ENCODE measurements at regions of chr3 and their contacts with region 1.

Region 1: DNA sequence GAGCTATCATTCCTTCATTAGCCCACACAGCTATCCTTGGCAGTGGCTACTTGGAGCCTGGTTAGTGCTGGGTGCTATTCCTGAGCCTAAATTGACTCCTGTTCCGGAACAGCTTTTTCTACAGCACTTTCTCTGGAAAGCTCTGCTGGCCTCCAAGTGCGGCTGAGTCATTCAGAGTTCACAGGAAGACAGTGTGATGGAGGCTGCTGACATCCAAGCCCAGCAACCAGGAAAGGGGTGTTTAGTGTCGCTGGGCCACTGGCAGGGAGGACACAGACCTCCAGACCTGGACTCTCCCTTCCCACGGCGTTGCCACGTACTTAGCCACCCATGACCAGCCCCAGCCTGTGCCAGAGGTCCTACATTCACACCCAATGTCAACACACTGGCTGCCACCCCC is 28.7 kb downstream of the CACNA2D2 start:
- DNase-seq: no peak
- H3K4me3 ChIP-seq: no peak overlapping the region
- H3K27ac ChIP-seq: no peak overlapping the region
- H3K4me1 ChIP-seq: peaks cover 0 to 8% (median under 1%) of the 10 kb centered on the region in 4 experiments; a peak in 5 of 7 replicates
- H3K27me3 ChIP-seq: no peaks in the 10 kb centered on the region; a peak in 1 of 7 replicates
- CTCF ChIP-seq: no peak
- EP300 ChIP-seq: no peak
- POLR2A ChIP-seq: no peak
- RAD21 ChIP-seq: no peak

Region 2: GRCh38 chr3:50177346-50177745 is 297.4 kb before region 1 on chr3:
- CTCF ChIA-PET with region 1: no interaction called
- POLR2A ChIA-PET with region 1: no interaction called
- DNase-seq: no peak
- H3K4me3 ChIP-seq: no peak overlapping the region
- H3K27ac ChIP-seq: no peak overlapping the region
- H3K4me1 ChIP-seq: no peaks in the 10 kb centered on the region; a peak in 2 of 7 replicates
- H3K27me3 ChIP-seq: no peaks in the 10 kb centered on the region
- CTCF ChIP-seq: no peak
- EP300 ChIP-seq: no peak
- POLR2A ChIP-seq: no peak
- RAD21 ChIP-seq: no peak

Region 3: GRCh38 chr3:50245831-50246516 is 228.7 kb before region 1 on chr3:
- CTCF ChIA-PET with region 1: no interaction called
- POLR2A ChIA-PET with region 1: no interaction called
- DNase-seq: peak in 1 of 2 experiments; percentile 99
- H3K4me3 ChIP-seq: peak overlapping the region in 2 of 4 experiments; percentile 23 to 27; a peak in 4 of 8 replicates
- H3K27ac ChIP-seq: peak overlapping the region; percentile 53
- H3K4me1 ChIP-seq: peaks cover 5 to 48% (median 41%) of the 10 kb centered on the region in 4 experiments
- H3K27me3 ChIP-seq: no peaks in the 10 kb centered on the region
- CTCF ChIP-seq: peak in 2 of 3 experiments; percentile 91 to 97; a peak in 3 of 4 replicates
- EP300 ChIP-seq: peak in 1 of 2 experiments; percentile 69; a peak in 1 of 3 replicates
- POLR2A ChIP-seq: no peak; a peak in 1 of 3 replicates
- RAD21 ChIP-seq: peak; percentile 75 to 91

Region 4: DNA sequence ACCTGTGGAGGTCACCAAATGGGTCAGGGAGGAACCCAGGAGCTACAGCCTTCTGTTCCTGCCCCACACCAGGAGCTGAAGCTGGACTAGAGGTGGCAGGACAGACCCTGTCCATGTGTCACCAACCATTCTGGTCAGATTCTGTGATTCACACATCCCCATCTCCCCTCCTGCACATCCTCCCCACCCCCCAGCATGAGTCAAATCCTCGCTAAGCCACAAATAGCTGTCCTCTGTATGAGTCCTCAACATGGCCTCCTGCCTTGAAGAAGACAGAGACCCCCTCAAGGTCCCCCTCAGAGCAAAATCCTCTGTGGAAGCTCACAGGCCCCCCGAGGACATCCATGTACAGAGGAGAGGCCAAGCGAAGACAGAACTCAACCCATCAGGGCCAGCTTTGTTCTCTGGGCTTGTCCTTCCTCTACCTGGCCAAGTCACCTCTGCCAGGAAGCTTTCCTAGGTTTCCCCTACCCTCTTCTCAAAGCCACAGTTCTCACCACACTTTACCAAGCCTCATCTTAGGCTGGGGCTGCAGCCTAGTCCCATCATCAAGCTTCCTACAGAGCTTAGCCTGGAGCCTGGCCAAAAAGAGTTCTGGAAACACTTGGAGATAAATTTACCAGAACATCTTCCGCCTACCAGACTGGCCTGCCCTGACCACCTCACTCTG is 11.6 kb after region 1 on chr3:
- CTCF ChIA-PET with region 1: interaction called, 18 read pairs
- POLR2A ChIA-PET with region 1: interaction called, 7 read pairs
- DNase-seq: no peak
- H3K4me3 ChIP-seq: no peak overlapping the region
- H3K27ac ChIP-seq: no peak overlapping the region
- H3K4me1 ChIP-seq: peaks cover 3 to 35% (median 12%) of the 10 kb centered on the region in 4 experiments; a peak in 6 of 7 replicates
- H3K27me3 ChIP-seq: no peaks in the 10 kb centered on the region; a peak in 1 of 7 replicates
- CTCF ChIP-seq: no peak
- EP300 ChIP-seq: no peak
- POLR2A ChIP-seq: no peak
- RAD21 ChIP-seq: no peak

Measured in H1 (cell line).